ENCODE measurements at regions of chr5 and their contacts with region 1.

Region 1: GRCh38 chr5:151115274-151115905 is 34.6 kb upstream of the TNIP1 start:
- DNase-seq: no peak
- ATAC-seq: peak; percentile 82
- H3K4me3 ChIP-seq: no peak overlapping the region
- H3K27ac ChIP-seq: no peak overlapping the region
- H3K4me1 ChIP-seq: peaks cover 17% of the 10 kb centered on the region
- H3K27me3 ChIP-seq: no peaks in the 10 kb centered on the region
- CTCF ChIP-seq: peak; percentile 78 to 95 (median 94)
- EP300 ChIP-seq: no peak
- POLR2A ChIP-seq: no peak
- RAD21 ChIP-seq: peak; percentile 92

Region 2: GRCh38 chr5:151037561-151038411 is 77.6 kb before region 1 on chr5:
- CTCF ChIA-PET with region 1: interaction called, 12 read pairs
- POLR2A ChIA-PET with region 1: interaction called, 4 read pairs
- RAD21 ChIA-PET with region 1: interaction called, 3 read pairs
- SMC1A ChIA-PET with region 1: interaction called, 22 read pairs
- in situ Hi-C with region 1: no loop called
- intact Hi-C with region 1: no loop called
- DNase-seq: no peak
- ATAC-seq: no peak
- H3K4me3 ChIP-seq: no peak overlapping the region
- H3K27ac ChIP-seq: no peak overlapping the region
- H3K4me1 ChIP-seq: no peaks in the 10 kb centered on the region
- H3K27me3 ChIP-seq: no peaks in the 10 kb centered on the region
- CTCF ChIP-seq: no peak
- EP300 ChIP-seq: no peak
- POLR2A ChIP-seq: no peak
- RAD21 ChIP-seq: no peak

Region 3: DNA sequence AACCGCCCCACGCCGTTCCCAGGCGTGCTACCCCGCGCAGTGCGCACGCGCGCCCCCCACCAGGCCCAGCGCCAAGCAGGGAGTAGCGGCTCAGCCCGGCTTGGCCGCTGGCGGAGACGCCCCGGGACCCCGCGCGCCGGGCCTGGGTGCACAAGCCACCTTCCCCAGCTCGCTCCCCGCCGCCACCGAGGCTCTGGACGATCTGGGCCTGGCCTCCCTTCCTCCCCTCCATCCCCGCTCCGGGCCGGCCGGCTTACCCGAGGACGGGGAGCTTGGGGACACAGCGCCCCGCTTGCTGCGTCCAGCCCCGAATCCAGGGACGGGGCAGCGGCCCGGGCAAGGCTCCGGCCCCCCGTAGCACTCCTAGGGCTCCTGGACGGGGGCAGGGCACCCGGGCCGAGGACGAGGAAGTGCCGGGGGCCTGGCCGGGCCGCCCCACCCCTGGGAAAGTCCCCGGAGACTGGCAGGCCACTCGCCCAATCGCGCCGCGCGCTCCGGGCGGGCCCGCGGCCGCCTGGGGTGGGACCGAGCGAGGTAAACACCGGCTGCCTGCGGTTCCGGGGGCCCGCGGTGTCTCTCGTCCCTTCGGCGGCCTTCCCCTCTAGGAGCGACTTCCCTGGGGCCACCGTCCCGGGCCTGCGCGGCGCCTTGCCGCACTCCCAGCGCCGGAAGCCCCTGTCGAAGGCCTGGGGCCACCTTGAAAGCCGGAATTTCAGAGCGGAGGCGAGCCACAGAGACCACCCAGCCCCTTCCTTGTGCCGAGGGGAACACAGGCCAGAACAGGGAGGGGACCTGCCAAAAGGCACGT is 34.6 kb before region 1 on chr5 and contains the start of gene TNIP1:
- CTCF ChIA-PET with region 1: interaction called, 90 read pairs
- POLR2A ChIA-PET with region 1: interaction called, 17 read pairs
- RAD21 ChIA-PET with region 1: interaction called, 90 read pairs
- SMC1A ChIA-PET with region 1: interaction called, 97 read pairs
- in situ Hi-C with region 1: no loop called
- intact Hi-C with region 1: loop called (anchors 5 kb)
- DNase-seq: no peak
- ATAC-seq: peak; percentile 78
- H3K4me3 ChIP-seq: peak within 1 kb of the TSS; percentile 89
- H3K27ac ChIP-seq: peak within 1 kb of the TSS; percentile 90
- H3K4me1 ChIP-seq: peaks cover 44% of the 10 kb centered on the region
- H3K27me3 ChIP-seq: no peaks in the 10 kb centered on the region
- CTCF ChIP-seq: no peak
- EP300 ChIP-seq: no peak; a peak in 1 of 4 replicates
- POLR2A ChIP-seq: peak; percentile 89
- RAD21 ChIP-seq: no peak
- polyA plus RNA-seq, gene TNIP1: 4.4 to 13.7 TPM

Region 4: GRCh38 chr5:151126199-151126645 is 10.8 kb after region 1 on chr5:
- CTCF ChIA-PET with region 1: interaction called, 114 read pairs
- POLR2A ChIA-PET with region 1: interaction called, 18 read pairs
- RAD21 ChIA-PET with region 1: interaction called, 40 read pairs
- SMC1A ChIA-PET with region 1: interaction called, 41 read pairs
- in situ Hi-C with region 1: no loop called
- intact Hi-C with region 1: no loop called
- DNase-seq: peak; percentile 66
- ATAC-seq: peak; percentile 65
- H3K4me3 ChIP-seq: no peak overlapping the region
- H3K27ac ChIP-seq: peak overlapping the region; percentile 75
- H3K4me1 ChIP-seq: peaks cover 65% of the 10 kb centered on the region
- H3K27me3 ChIP-seq: no peaks in the 10 kb centered on the region
- CTCF ChIP-seq: peak; percentile 84 to 92 (median 87)
- EP300 ChIP-seq: no peak
- POLR2A ChIP-seq: peak; percentile 50; the same call in 1 of the 2 replicates
- RAD21 ChIP-seq: peak; percentile 93

Region 5: DNA sequence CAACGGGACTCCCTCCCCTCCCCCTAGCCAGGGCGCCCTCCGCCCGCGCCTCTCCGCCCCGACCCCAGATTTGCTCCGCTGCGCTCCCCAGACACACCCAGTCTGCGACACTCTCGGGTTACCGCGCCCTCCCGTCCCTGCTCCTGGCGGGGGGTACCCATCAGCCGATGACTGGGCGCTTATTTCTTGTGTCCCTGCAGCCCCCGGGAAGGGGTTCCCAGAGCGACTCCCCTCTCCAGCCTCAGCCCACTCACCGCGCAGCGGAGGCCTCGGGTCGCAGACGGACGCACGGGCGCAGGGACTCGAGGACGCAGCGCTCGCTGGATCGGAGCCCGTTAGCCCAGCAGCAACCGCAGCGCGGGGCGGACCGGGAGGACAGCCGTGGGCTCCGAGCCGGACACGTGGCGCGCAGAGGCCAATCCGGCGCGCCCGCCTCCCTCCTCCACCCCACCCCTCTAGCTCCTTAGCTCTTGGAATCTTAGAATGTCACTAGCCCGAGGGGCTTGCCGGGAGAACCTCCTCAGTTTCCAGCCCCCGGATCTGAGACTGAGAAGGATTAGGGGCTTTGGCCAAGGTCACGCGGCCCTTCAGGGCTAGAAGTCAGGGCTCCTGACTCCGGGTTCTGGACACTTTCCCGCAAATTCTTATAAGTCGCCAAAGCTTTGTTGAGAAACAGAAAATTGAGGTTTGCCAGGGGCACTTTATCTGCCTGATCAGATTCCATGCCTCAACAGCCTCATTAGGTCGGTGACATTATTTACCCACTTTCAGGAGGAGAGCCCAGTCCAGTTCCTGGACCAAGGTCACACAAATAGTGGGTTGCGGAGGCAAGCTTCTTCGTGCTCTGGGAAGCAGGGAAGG is 42.3 kb after region 1 on chr5 and contains the start of gene ANXA6:
- CTCF ChIA-PET with region 1: interaction called, 1,107 read pairs
- POLR2A ChIA-PET with region 1: interaction called, 4 read pairs
- RAD21 ChIA-PET with region 1: interaction called, 110 read pairs
- SMC1A ChIA-PET with region 1: interaction called, 1,132 read pairs
- in situ Hi-C with region 1: loop called (anchors 5 kb)
- intact Hi-C with region 1: no loop called
- DNase-seq: no peak
- ATAC-seq: peak; percentile 77
- H3K4me3 ChIP-seq: peak within 1 kb of the TSS; percentile 97
- H3K27ac ChIP-seq: peak within 1 kb of the TSS; percentile 89
- H3K4me1 ChIP-seq: peaks cover 26% of the 10 kb centered on the region
- H3K27me3 ChIP-seq: no peaks in the 10 kb centered on the region
- CTCF ChIP-seq: no peak
- EP300 ChIP-seq: no peak
- POLR2A ChIP-seq: peak; percentile 81
- RAD21 ChIP-seq: no peak
- polyA plus RNA-seq, gene ANXA6: 44.0 to 73.1 TPM

Region 6: GRCh38 chr5:151223469-151224264 is 108.3 kb after region 1 on chr5 and contains the start of gene CCDC69:
- CTCF ChIA-PET with region 1: interaction called, 10 read pairs
- POLR2A ChIA-PET with region 1: no interaction called
- RAD21 ChIA-PET with region 1: interaction called, 4 read pairs
- SMC1A ChIA-PET with region 1: interaction called, 3 read pairs
- in situ Hi-C with region 1: no loop called
- intact Hi-C with region 1: no loop called
- DNase-seq: no peak
- ATAC-seq: peak; percentile 82
- H3K4me3 ChIP-seq: peak within 1 kb of the TSS; percentile 97
- H3K27ac ChIP-seq: peak within 1 kb of the TSS; percentile 89
- H3K4me1 ChIP-seq: peaks cover 24% of the 10 kb centered on the region
- H3K27me3 ChIP-seq: no peaks in the 10 kb centered on the region
- CTCF ChIP-seq: no peak
- EP300 ChIP-seq: no peak
- POLR2A ChIP-seq: peak; percentile 80
- RAD21 ChIP-seq: 0 out of 2 replicates have a peak, but pooled peaks have one; percentile 16
- polyA plus RNA-seq, gene CCDC69: 13.5 to 21.4 TPM